Ascending aorta (tissue), 2 donors: ENCODE measurements at regions of chr1 and their contacts with region 1.

Region 1: GRCh38 chr1:109493805-109494539 is at the start of gene CYB561D1:
- DNase-seq: peak; percentile 35 to 92
- H3K4me3 ChIP-seq: peak within 1 kb of the TSS; percentile 61 to 89
- H3K27ac ChIP-seq: peak within 1 kb of the TSS; percentile 78 to 84
- H3K4me1 ChIP-seq: peaks cover 7 to 18% of the 10 kb centered on the region in 2 donors
- H3K27me3 ChIP-seq: no peaks in the 10 kb centered on the region
- CTCF ChIP-seq: peak; percentile 92 to 98 (median 95)
- total RNA-seq, gene CYB561D1: 26.8 TPM

Region 2: DNA sequence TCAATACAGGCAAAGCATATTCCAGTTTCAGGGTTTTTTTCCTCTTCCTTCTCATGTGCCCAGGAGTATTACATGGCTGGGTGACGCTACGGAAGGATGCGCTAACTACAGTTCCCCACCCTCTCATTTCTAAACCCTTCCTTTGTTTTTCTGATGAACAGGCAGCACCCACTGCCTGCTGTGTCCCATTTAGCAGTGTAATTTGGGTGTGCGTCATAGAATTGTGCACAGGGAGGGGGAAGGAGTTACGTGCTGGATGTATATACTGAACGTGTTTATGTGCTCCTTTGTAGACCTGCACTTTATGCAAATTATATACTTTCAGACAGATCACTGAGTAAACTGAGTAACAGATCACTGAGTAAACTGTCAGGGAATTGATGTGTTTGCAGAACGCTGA is 335.5 kb before region 1 on chr1:
- intact Hi-C with region 1: no loop called
- DNase-seq: no peak
- H3K4me3 ChIP-seq: no peak overlapping the region
- H3K27ac ChIP-seq: no peak overlapping the region
- H3K4me1 ChIP-seq: peaks cover 0 to 9% of the 10 kb centered on the region in 2 donors
- H3K27me3 ChIP-seq: no peaks in the 10 kb centered on the region
- CTCF ChIP-seq: no peak

Region 3: DNA sequence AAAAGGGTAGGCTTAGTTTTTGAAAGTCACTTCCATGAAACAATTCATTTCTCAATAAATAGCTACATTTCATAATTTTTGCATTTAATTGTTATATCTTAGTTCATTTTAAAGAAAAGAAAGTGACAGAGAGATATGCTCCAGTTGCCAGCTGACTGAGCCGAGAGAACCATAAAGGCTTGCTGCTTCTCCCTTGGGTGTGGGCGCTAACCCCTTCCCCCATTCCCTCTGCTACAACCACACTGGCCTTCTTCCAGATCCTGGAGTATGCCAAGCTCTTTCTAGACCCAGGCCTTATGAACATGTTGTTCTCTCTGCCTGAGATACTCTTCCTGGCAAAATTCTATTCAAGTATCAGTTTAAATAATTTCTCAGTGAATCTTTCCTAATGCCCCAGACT is 108.6 kb before region 1 on chr1:
- intact Hi-C with region 1: no loop called
- DNase-seq: peak in 1 of 2 donors; percentile 85
- H3K4me3 ChIP-seq: peak overlapping the region; percentile 5 to 11
- H3K27ac ChIP-seq: peak overlapping the region; percentile 90 to 91
- H3K4me1 ChIP-seq: peaks cover 23 to 87% of the 10 kb centered on the region in 2 donors
- H3K27me3 ChIP-seq: no peaks in the 10 kb centered on the region
- CTCF ChIP-seq: no peak

Region 4: GRCh38 chr1:109509176-109510134 is 15.5 kb after region 1 on chr1 and contains the start of gene AMIGO1:
- intact Hi-C with region 1: loop called (anchors 1 kb)
- DNase-seq: peak in 1 of 2 donors; percentile 76
- H3K4me3 ChIP-seq: peak within 1 kb of the TSS; percentile 84 to 98
- H3K27ac ChIP-seq: peak within 1 kb of the TSS; percentile 42 to 53
- H3K4me1 ChIP-seq: peaks cover 0 to 15% of the 10 kb centered on the region in 2 donors
- H3K27me3 ChIP-seq: no peaks in the 10 kb centered on the region
- CTCF ChIP-seq: no peak
- total RNA-seq, gene AMIGO1: 4.7 TPM